ENCODE measurements at regions of chr6 and their contacts with region 1.

Region 1: GRCh38 chr6:136378886-136379285 is 89.2 kb upstream of the BCLAF1 start:
- DNase-seq: no peak
- H3K4me3 ChIP-seq: no peak overlapping the region
- H3K27ac ChIP-seq: no peak overlapping the region
- H3K4me1 ChIP-seq: no peaks in the 10 kb centered on the region
- H3K27me3 ChIP-seq: no peaks in the 10 kb centered on the region
- CTCF ChIP-seq: peak in 3 of 6 experiments; percentile 27 to 48 (median 39)
- POLR2A ChIP-seq: no peak

Region 2: GRCh38 chr6:136487749-136488425 is 109.0 kb after region 1 on chr6:
- intact Hi-C with region 1: no loop called
- DNase-seq: no peak
- H3K4me3 ChIP-seq: no peak overlapping the region
- H3K27ac ChIP-seq: peak overlapping the region in 1 of 4 donors; percentile 6
- H3K4me1 ChIP-seq: peaks cover 0 to 15% (median 0%) of the 10 kb centered on the region in 3 donors
- H3K27me3 ChIP-seq: no peaks in the 10 kb centered on the region
- CTCF ChIP-seq: no peak
- POLR2A ChIP-seq: no peak

Region 3: DNA sequence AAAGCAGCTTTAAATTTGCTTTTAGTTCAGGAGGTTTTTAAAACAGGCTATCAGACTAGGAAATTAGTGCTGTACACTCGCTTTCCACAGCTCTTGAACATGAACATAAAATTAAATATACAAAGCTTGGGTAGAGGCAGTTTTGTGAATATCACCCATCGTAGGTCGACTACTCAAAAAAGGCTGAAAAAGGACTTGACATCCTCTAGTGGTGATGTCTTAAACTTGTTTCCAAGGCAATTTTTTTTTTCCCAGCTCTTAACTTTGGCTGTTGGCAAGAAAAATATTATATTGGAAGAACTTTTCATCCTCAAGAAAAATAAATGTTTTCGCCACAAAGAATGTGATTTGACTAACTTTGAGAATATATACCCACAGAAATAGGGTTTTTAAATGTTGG is 168.4 kb after region 1 on chr6:
- intact Hi-C with region 1: loop called (anchors 10 kb)
- DNase-seq: no peak
- H3K4me3 ChIP-seq: no peak overlapping the region
- H3K27ac ChIP-seq: no peak overlapping the region
- H3K4me1 ChIP-seq: peaks cover 0 to 29% (median 3%) of the 10 kb centered on the region in 3 donors
- H3K27me3 ChIP-seq: peaks cover 0 to 27% (median 0%) of the 10 kb centered on the region in 4 donors
- CTCF ChIP-seq: peak in 4 of 6 experiments; percentile 50 to 74 (median 56)
- POLR2A ChIP-seq: no peak

Region 4: DNA sequence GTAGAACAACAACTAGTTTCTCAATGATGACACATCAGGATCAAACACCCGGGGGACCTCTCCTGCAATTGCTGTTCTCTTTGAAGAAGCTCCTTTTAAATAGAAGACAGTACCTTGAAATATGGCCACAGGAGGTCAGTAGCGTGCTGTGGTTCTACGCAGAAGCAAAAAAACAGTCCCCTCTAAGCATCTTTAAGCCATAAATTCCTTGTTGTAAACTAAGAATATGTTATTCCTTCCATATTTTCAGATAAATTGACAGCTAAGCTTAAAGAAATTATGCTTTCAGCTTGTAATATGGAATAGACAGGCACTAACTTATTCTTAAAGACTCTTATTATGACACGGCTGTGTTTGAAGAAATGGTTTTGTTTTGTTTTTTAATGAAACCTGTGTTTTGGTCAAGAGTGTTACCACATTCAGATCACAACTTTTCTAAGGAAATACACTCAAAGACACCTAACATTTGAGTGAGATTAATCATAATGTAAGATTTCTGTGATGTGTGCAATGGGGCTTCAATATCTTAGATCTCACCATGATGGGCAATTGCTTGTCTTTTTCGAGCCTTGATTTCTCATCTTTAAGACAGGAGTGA is 715.6 kb after region 1 on chr6:
- intact Hi-C with region 1: no loop called
- DNase-seq: no peak
- H3K4me3 ChIP-seq: no peak overlapping the region
- H3K27ac ChIP-seq: no peak overlapping the region
- H3K4me1 ChIP-seq: peaks cover 0 to 11% (median 0%) of the 10 kb centered on the region in 3 donors
- H3K27me3 ChIP-seq: no peaks in the 10 kb centered on the region
- CTCF ChIP-seq: peak; percentile 59 to 87 (median 72)
- POLR2A ChIP-seq: no peak